ENCODE measurements at regions of chr1 and their contacts with region 1.

Region 1: DNA sequence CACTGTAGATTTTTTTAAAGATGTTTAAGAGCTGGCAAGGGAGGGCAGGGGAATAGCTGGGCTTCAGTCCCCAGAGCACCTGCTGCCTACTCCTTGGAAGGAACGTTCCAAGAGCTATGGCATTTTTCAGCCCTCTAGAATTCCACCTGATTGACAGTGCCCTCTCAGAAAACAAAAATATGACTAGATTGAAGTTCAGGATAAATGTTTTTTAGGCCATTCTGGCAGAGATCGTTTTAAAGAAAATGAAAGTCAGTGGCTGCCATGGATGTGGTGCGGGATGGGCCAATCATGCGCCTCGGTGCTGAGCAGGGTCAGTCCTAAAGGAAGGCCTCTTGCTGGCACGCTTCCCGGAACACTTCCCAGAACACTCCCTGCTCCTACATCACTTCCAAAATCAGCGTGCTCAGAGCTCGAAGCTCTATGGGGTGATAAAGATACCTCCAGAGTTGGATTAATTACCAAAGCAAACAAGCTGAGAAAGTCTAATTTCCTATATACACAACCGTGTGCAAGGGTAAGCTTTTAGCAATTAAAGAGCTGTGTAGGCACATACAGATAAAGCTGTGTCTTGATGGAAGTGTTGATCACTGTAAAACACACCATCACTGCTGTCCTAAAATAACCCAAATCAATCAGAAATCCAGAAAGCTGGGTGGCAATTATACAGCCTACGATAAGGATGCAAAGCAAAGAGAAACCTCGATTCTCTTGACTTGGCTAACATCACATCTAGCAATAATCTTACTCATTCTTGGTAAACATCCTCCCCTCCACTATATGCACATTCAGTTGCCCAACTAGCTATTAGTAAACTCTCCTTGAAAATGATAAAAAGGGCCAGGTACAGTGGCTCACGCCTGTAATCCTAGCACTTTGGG is 34.6 kb downstream of the TGFBR3 start:
- DNase-seq: peak; percentile 85
- H3K4me3 ChIP-seq: peak overlapping the region; percentile 12 to 52 (median 19)
- H3K27ac ChIP-seq: peak overlapping the region; percentile 42
- H3K4me1 ChIP-seq: peaks cover 15% of the 10 kb centered on the region
- H3K27me3 ChIP-seq: no peaks in the 10 kb centered on the region
- CTCF ChIP-seq: no peak
- POLR2A ChIP-seq: no peak

Region 2: DNA sequence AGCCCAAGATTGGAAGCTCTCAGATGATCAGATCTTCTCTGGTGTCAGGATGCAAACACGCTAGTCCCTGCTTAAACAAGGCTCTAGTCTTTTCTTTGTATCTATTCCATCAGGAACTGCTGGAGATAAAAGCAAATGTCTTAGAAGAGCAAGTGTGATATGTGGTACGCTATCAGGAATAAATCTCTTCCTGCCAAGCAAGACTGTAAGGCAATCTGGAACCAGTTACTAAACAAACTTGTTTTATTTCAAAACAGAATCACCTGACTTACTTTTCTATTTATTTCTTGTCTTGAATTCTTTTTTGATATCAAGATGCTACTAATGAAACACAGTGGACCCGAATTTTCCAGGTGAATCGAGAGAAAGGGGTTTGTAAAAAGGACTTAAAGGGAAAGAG is 689.6 kb before region 1 on chr1:
- CTCF ChIA-PET with region 1: no interaction called
- POLR2A ChIA-PET with region 1: no interaction called
- dilution Hi-C with region 1: no loop called
- intact Hi-C with region 1: no loop called
- DNase-seq: no peak
- H3K4me3 ChIP-seq: no peak overlapping the region
- H3K27ac ChIP-seq: no peak overlapping the region
- H3K4me1 ChIP-seq: no peaks in the 10 kb centered on the region
- H3K27me3 ChIP-seq: no peaks in the 10 kb centered on the region
- CTCF ChIP-seq: no peak
- POLR2A ChIP-seq: no peak

Region 3: DNA sequence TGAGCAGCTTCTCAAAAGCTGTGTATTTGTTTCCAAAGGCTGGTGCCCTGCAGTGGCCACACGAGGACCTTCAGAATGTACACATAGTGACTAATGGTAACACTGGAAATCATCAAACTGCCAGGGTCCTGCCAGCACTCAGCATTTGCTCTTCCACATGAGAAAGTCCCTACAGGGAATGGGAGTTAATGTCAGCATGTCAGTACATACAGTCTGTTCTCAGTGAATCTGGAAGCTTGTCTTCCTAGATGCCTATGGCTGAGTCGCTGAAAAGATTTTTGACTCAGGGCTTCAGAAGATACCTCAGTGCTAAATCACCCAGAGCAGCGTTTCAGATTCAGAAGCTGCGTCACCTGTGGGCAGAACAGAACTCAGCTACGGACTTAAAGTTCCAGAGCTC is 242.5 kb before region 1 on chr1:
- CTCF ChIA-PET with region 1: no interaction called
- POLR2A ChIA-PET with region 1: no interaction called
- dilution Hi-C with region 1: no loop called
- intact Hi-C with region 1: no loop called
- DNase-seq: no peak
- H3K4me3 ChIP-seq: no peak overlapping the region
- H3K27ac ChIP-seq: no peak overlapping the region
- H3K4me1 ChIP-seq: no peaks in the 10 kb centered on the region
- H3K27me3 ChIP-seq: no peaks in the 10 kb centered on the region
- CTCF ChIP-seq: no peak
- POLR2A ChIP-seq: no peak

Region 4: GRCh38 chr1:91670781-91671180 is 180.6 kb before region 1 on chr1:
- CTCF ChIA-PET with region 1: no interaction called
- POLR2A ChIA-PET with region 1: no interaction called
- dilution Hi-C with region 1: no loop called
- intact Hi-C with region 1: loop called (anchors 1 kb)
- DNase-seq: no peak
- H3K4me3 ChIP-seq: no peak overlapping the region
- H3K27ac ChIP-seq: no peak overlapping the region
- H3K4me1 ChIP-seq: no peaks in the 10 kb centered on the region
- H3K27me3 ChIP-seq: no peaks in the 10 kb centered on the region
- CTCF ChIP-seq: no peak
- POLR2A ChIP-seq: no peak

Region 5: GRCh38 chr1:91864017-91864700 is 12.8 kb after region 1 on chr1:
- CTCF ChIA-PET with region 1: interaction called, 11 read pairs
- POLR2A ChIA-PET with region 1: no interaction called
- dilution Hi-C with region 1: no loop called
- intact Hi-C with region 1: no loop called
- DNase-seq: no peak
- H3K4me3 ChIP-seq: no peak overlapping the region
- H3K27ac ChIP-seq: no peak overlapping the region
- H3K4me1 ChIP-seq: no peaks in the 10 kb centered on the region
- H3K27me3 ChIP-seq: no peaks in the 10 kb centered on the region
- CTCF ChIP-seq: no peak
- POLR2A ChIP-seq: no peak

Region 6: DNA sequence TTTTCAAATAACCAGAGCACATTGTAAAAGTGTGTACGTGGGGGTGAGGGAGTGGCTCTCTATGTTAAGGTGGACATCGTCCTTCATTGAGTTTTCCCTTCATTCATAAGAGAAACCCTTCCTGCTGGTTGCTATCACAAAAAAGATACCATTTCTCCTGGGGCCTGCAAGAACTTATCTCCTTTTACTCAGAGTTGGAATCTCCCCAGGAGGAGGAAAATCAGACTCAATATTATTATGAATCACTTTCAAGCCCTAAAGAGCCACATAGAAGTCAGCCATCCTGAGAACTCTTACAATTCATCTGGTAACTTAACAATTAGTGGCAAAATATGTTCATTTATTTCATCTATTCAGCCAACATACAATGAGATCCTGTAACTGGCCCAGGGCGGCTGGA is 61.6 kb after region 1 on chr1:
- CTCF ChIA-PET with region 1: no interaction called
- POLR2A ChIA-PET with region 1: no interaction called
- dilution Hi-C with region 1: no loop called
- intact Hi-C with region 1: loop called (anchors 2 kb)
- DNase-seq: peak; percentile 56
- H3K4me3 ChIP-seq: no peak overlapping the region
- H3K27ac ChIP-seq: peak overlapping the region; percentile 73
- H3K4me1 ChIP-seq: peaks cover 23% of the 10 kb centered on the region
- H3K27me3 ChIP-seq: no peaks in the 10 kb centered on the region
- CTCF ChIP-seq: no peak
- POLR2A ChIP-seq: no peak

Measured in endothelial cell of umbilical vein (primary cell).